B cell (primary cell): ENCODE measurements at regions of chr4 and their contacts with region 1.

Region 1: GRCh38 chr4:6986781-6987587 is 56.2 kb upstream of the TADA2B start:
- DNase-seq: peak; percentile 96
- ATAC-seq: peak; percentile 93
- H3K4me3 ChIP-seq: peak overlapping the region; percentile 80 to 93 (median 84)
- H3K4me3 Mint-ChIP-seq: peak overlapping the region; percentile 96
- H3K27ac ChIP-seq: peak overlapping the region; percentile 91 to 95
- H3K27ac Mint-ChIP-seq: peak overlapping the region; percentile 98
- H3K4me1 ChIP-seq: peaks cover 57 to 75% of the 10 kb centered on the region in 2 donors
- H3K4me1 Mint-ChIP-seq: peaks cover 87% of the 10 kb centered on the region
- H3K27me3 ChIP-seq: no peaks in the 10 kb centered on the region
- H3K27me3 Mint-ChIP-seq: no peaks in the 10 kb centered on the region
- CTCF ChIP-seq: no peak

Region 2: DNA sequence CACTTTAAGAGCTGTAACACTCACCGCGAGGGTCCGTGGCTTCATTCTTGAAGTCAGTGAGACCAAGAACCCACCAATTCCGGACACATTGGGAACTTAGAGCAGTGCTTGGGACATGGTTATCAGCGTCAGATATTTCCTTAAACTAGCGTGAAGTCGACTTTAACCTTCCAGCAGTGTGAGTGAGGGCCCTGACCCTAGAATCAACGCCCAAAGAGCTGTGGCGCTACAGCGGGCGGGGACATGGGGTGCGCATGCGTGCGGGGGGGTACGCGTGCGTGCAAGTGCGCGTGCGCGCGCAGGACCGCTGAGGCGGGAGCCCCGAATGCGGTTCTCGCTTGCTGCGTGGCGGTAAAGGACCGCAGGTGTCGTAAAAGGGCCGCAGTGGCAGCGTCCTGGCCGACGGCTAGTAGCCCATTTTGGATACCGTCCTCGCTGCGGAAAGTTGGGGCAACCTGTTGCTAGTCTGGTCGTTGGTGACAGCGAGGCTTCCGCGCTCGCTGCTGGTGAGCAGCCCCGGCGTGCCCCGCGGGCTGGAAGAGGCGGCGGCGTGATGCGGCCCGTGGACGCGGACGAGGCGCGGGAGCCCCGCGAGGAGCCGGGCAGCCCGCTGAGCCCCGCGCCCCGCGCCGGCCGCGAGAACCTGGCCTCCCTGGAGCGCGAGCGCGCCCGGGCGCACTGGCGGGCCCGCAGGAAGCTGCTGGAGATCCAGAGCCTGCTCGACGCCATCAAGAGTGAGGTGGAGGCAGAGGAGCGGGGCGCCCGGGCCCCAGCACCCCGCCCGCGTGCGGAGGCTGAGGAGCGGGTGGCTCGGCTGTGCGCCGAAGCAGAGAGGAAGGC is 313.1 kb before region 1 on chr4:
- CTCF ChIA-PET with region 1: no interaction called
- POLR2A ChIA-PET with region 1: no interaction called
- intact Hi-C with region 1: loop called (anchors 1 kb)
- DNase-seq: peak; percentile 97
- ATAC-seq: peak; percentile 89
- H3K4me3 ChIP-seq: peak overlapping the region; percentile 22 to 82 (median 63)
- H3K4me3 Mint-ChIP-seq: peak overlapping the region; percentile 91
- H3K27ac ChIP-seq: peak overlapping the region; percentile 67 to 71
- H3K27ac Mint-ChIP-seq: peak overlapping the region; percentile 99
- H3K4me1 ChIP-seq: peaks cover 27 to 35% of the 10 kb centered on the region in 2 donors
- H3K4me1 Mint-ChIP-seq: peaks cover 43% of the 10 kb centered on the region
- H3K27me3 ChIP-seq: no peaks in the 10 kb centered on the region
- H3K27me3 Mint-ChIP-seq: no peaks in the 10 kb centered on the region
- CTCF ChIP-seq: no peak

Region 3: GRCh38 chr4:6716018-6716911 is 270.7 kb before region 1 on chr4 and contains the start of gene BLOC1S4:
- CTCF ChIA-PET with region 1: interaction called, 4 read pairs
- POLR2A ChIA-PET with region 1: no interaction called
- intact Hi-C with region 1: loop called (anchors 1 kb)
- DNase-seq: peak; percentile 97
- ATAC-seq: peak; percentile 83
- H3K4me3 ChIP-seq: peak within 1 kb of the TSS; percentile 67 to 82 (median 80)
- H3K4me3 Mint-ChIP-seq: peak within 1 kb of the TSS; percentile 99
- H3K27ac ChIP-seq: peak within 1 kb of the TSS; percentile 76 to 85
- H3K27ac Mint-ChIP-seq: peak within 1 kb of the TSS; percentile 100
- H3K4me1 ChIP-seq: peaks cover 21 to 33% of the 10 kb centered on the region in 2 donors
- H3K4me1 Mint-ChIP-seq: peaks cover 38% of the 10 kb centered on the region
- H3K27me3 ChIP-seq: no peaks in the 10 kb centered on the region
- H3K27me3 Mint-ChIP-seq: no peaks in the 10 kb centered on the region
- CTCF ChIP-seq: no peak
- total RNA-seq, gene BLOC1S4: 25.3 and 26.3 TPM in 2 replicates

Region 4: DNA sequence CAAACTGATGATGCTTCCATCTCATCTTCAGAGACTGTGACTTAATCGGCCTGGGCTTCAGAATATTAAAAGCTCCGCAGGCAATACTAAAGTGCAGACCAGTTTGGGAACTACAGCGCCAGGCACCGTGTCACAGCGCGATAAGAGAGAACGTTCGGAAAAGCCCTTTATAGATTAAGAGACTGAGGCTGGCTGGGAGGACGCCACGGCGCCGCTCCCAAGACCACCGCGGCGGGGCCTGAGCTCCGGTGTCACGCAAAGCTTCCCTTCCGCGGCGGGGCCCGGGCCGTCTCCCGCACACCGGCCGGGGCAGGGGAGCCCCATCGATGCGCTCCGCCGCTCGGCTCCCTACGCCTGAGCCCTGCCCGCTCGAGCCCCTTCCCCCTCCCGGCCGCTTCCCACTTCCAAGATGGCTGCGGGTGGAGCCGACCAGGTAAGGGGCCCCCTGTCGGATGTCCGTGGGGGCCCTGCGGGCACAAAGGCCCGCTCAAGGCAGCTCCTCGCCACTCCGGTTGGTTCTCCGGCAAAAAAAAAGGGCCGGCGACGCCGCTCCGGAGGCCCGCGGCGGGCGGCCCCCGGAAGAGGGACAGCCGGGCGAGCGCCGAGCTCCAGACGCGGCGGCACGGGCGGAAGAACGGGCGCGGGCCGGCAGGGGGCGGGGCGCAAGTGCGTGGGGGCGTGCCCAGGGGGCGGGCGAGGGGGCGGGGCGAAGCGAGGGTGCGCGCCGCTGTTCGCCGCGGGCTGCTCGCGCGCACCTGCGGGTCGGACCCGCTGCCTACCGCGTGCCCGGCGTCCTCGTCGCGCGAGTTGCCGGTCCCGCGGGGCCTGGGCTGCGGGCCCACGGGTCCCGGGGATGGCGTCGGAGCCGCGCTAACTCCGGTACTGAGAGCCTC is 77.7 kb before region 1 on chr4 and contains the start of gene TBC1D14:
- CTCF ChIA-PET with region 1: interaction called, 12 read pairs
- POLR2A ChIA-PET with region 1: interaction called, 12 read pairs
- intact Hi-C with region 1: loop called (anchors 1 kb)
- DNase-seq: peak; percentile 94
- ATAC-seq: peak; percentile 89
- H3K4me3 ChIP-seq: peak within 1 kb of the TSS; percentile 72 to 85 (median 78)
- H3K4me3 Mint-ChIP-seq: peak within 1 kb of the TSS; percentile 95
- H3K27ac ChIP-seq: peak within 1 kb of the TSS; percentile 93 to 97
- H3K27ac Mint-ChIP-seq: peak within 1 kb of the TSS; percentile 94
- H3K4me1 ChIP-seq: peaks cover 33 to 43% of the 10 kb centered on the region in 2 donors
- H3K4me1 Mint-ChIP-seq: peaks cover 38% of the 10 kb centered on the region
- H3K27me3 ChIP-seq: peaks cover 0 to 3% (median 0%) of the 10 kb centered on the region in 4 experiments
- H3K27me3 Mint-ChIP-seq: peaks cover 8% of the 10 kb centered on the region
- CTCF ChIP-seq: no peak
- total RNA-seq, gene TBC1D14: 42.0 and 44.1 TPM in 2 replicates

Region 5: DNA sequence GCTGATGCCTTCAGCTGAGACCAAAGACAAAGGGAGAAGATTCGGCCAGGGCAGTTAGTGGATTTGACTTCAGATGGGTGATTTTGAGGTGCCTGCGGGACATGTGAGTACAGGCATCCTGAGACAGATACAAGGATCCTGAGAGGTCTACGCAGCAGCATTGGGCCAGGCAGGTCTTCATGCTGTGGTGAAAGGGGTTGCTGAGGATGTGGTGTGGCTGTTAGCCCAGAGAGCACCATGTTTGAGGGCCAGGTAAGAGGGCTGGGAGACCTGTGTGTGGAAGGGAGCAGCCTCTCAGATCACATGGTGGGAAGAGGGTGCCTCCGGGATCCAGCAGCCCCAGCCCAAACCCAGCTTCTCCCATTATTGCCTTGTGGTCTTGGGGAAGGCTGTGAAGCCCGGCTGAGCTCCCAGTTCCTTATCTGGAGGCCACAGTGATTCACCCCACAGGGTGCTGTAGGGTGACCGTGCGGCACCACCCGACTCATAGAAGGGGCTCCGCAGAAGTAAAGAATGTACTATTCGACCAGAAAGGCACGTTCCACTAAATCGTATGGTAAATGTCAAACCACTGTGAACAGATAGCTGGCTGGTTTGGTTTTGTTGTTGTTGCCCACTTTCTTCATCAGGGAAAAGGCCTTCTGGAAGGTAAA is 28.5 kb after region 1 on chr4:
- CTCF ChIA-PET with region 1: interaction called, 3 read pairs
- POLR2A ChIA-PET with region 1: interaction called, 9 read pairs
- intact Hi-C with region 1: loop called (anchors 1 kb)
- DNase-seq: no peak
- ATAC-seq: no peak
- H3K4me3 ChIP-seq: no peak overlapping the region
- H3K4me3 Mint-ChIP-seq: no peak overlapping the region
- H3K27ac ChIP-seq: no peak overlapping the region
- H3K27ac Mint-ChIP-seq: peak overlapping the region; percentile 56
- H3K4me1 ChIP-seq: peaks cover 13 to 18% of the 10 kb centered on the region in 2 donors
- H3K4me1 Mint-ChIP-seq: peaks cover 23% of the 10 kb centered on the region
- H3K27me3 ChIP-seq: no peaks in the 10 kb centered on the region
- H3K27me3 Mint-ChIP-seq: no peaks in the 10 kb centered on the region
- CTCF ChIP-seq: no peak

Region 6: GRCh38 chr4:7101692-7102515 is 114.9 kb after region 1 on chr4:
- CTCF ChIA-PET with region 1: interaction called, 3 read pairs
- POLR2A ChIA-PET with region 1: no interaction called
- intact Hi-C with region 1: loop called (anchors 1 kb)
- DNase-seq: peak; percentile 66
- ATAC-seq: peak; percentile 51
- H3K4me3 ChIP-seq: peak overlapping the region in 4 of 5 experiments; percentile 15 to 84 (median 72)
- H3K4me3 Mint-ChIP-seq: peak overlapping the region; percentile 91
- H3K27ac ChIP-seq: no peak overlapping the region
- H3K27ac Mint-ChIP-seq: peak overlapping the region; percentile 61
- H3K4me1 ChIP-seq: peaks cover 21 to 25% of the 10 kb centered on the region in 2 donors
- H3K4me1 Mint-ChIP-seq: peaks cover 19% of the 10 kb centered on the region
- H3K27me3 ChIP-seq: peaks cover 0 to 9% (median under 1%) of the 10 kb centered on the region in 4 experiments
- H3K27me3 Mint-ChIP-seq: peaks cover 12% of the 10 kb centered on the region
- CTCF ChIP-seq: peak; percentile 74